WTC11 (cell line): ENCODE measurements at regions of chr14 and their contacts with region 1.

Region 1: GRCh38 chr14:24710403-24711112 is 76.6 kb upstream of the GZMB start:
- DNase-seq: peak; percentile 68
- ATAC-seq: peak; percentile 73
- H3K4me3 Mint-ChIP-seq: no peak overlapping the region
- H3K27ac Mint-ChIP-seq: no peak overlapping the region
- H3K4me1 Mint-ChIP-seq: peaks cover 14% of the 10 kb centered on the region
- H3K27me3 Mint-ChIP-seq: no peaks in the 10 kb centered on the region
- CTCF ChIP-seq: peak; percentile 38; the same call in 1 of the 2 replicates

Region 2: DNA sequence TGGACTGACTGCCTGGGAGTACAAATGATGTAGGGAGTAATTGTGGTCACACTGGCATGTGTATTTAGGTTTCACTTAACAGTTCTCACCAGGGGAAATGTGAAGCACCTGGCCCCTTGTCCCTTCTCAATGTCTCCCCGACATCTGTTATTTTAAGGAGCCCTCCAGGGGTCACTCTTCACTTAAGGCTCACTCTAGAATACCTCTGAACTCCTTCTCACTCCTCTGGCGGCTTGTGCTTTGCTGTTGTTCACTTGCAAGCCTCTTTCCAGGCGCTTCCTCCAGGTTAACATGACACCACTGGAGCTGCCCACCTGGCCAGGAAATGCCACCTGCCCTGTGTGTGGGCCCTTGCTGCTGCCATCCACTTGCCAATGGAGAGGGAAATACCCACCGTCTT is 20.1 kb before region 1 on chr14:
- CTCF ChIA-PET with region 1: interaction called, 29 read pairs
- POLR2A ChIA-PET with region 1: no interaction called
- DNase-seq: peak; percentile 47
- ATAC-seq: peak; percentile 97
- H3K4me3 Mint-ChIP-seq: no peak overlapping the region
- H3K27ac Mint-ChIP-seq: no peak overlapping the region
- H3K4me1 Mint-ChIP-seq: peaks cover 18% of the 10 kb centered on the region
- H3K27me3 Mint-ChIP-seq: peaks cover 14% of the 10 kb centered on the region
- CTCF ChIP-seq: no peak

Region 3: GRCh38 chr14:24725311-24725710 is 14.8 kb after region 1 on chr14:
- CTCF ChIA-PET with region 1: interaction called, 10 read pairs
- POLR2A ChIA-PET with region 1: no interaction called
- DNase-seq: no peak
- ATAC-seq: no peak
- H3K4me3 Mint-ChIP-seq: no peak overlapping the region
- H3K27ac Mint-ChIP-seq: no peak overlapping the region
- H3K4me1 Mint-ChIP-seq: no peaks in the 10 kb centered on the region
- H3K27me3 Mint-ChIP-seq: no peaks in the 10 kb centered on the region
- CTCF ChIP-seq: no peak

Region 4: DNA sequence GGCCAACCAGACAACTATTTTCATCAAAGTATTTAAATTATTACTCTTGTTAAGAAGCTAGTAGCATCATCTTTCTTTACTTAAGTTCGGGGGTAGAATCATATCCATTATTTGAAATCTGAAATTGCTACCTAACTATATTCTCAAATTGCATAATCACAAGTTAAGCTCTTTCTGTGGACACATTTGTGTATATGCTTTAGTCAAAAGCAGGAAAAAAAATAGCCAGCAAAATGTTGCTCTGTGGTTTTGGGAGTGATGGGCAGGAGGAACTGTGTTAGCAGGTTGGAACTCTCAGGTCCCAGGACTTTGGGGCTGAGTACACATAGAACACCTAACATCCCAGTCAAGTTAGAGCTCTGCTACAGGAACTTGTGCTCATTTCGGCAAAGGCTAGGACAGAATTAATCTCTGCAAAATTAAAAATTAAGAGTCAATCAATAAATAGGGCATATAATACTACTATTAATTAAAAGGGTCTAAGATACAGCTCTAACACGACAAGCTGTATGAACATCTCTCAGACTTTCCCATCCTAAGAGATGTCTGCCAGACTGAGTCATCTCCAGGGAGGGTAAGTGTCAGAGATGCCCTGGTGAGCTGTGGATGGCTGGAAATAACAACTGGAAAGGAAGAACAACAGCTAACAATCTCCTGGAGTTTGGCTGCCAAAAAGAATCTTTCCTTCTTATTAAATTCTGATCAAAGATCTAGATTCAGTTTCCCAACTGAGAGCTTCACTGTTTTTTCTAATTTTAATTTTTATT is 126.9 kb after region 1 on chr14:
- CTCF ChIA-PET with region 1: interaction called, 10 read pairs
- POLR2A ChIA-PET with region 1: no interaction called
- DNase-seq: no peak
- ATAC-seq: no peak
- H3K4me3 Mint-ChIP-seq: no peak overlapping the region
- H3K27ac Mint-ChIP-seq: no peak overlapping the region
- H3K4me1 Mint-ChIP-seq: peaks cover 8% of the 10 kb centered on the region; the same call in 1 of the 2 replicates
- H3K27me3 Mint-ChIP-seq: no peaks in the 10 kb centered on the region
- CTCF ChIP-seq: no peak

Region 5: GRCh38 chr14:25122211-25122610 is 411.7 kb after region 1 on chr14:
- CTCF ChIA-PET with region 1: no interaction called
- POLR2A ChIA-PET with region 1: no interaction called
- DNase-seq: no peak
- ATAC-seq: no peak
- H3K4me3 Mint-ChIP-seq: no peak overlapping the region
- H3K27ac Mint-ChIP-seq: no peak overlapping the region
- H3K4me1 Mint-ChIP-seq: peaks cover 3% of the 10 kb centered on the region; the same call in 1 of the 2 replicates
- H3K27me3 Mint-ChIP-seq: no peaks in the 10 kb centered on the region; the same call in 1 of the 2 replicates
- CTCF ChIP-seq: no peak

Region 6: GRCh38 chr14:25237845-25238244 is 527.3 kb after region 1 on chr14:
- CTCF ChIA-PET with region 1: interaction called, 11 read pairs
- POLR2A ChIA-PET with region 1: no interaction called
- DNase-seq: peak; percentile 53
- ATAC-seq: peak; percentile 98
- H3K4me3 Mint-ChIP-seq: peak overlapping the region; percentile 33
- H3K27ac Mint-ChIP-seq: no peak overlapping the region
- H3K4me1 Mint-ChIP-seq: peaks cover 28% of the 10 kb centered on the region
- H3K27me3 Mint-ChIP-seq: peaks cover 4% of the 10 kb centered on the region; the same call in 1 of the 2 replicates
- CTCF ChIP-seq: no peak